Endothelial cell of umbilical vein (primary cell): ENCODE measurements at regions of chr6 and their contacts with region 1.

Region 1: DNA sequence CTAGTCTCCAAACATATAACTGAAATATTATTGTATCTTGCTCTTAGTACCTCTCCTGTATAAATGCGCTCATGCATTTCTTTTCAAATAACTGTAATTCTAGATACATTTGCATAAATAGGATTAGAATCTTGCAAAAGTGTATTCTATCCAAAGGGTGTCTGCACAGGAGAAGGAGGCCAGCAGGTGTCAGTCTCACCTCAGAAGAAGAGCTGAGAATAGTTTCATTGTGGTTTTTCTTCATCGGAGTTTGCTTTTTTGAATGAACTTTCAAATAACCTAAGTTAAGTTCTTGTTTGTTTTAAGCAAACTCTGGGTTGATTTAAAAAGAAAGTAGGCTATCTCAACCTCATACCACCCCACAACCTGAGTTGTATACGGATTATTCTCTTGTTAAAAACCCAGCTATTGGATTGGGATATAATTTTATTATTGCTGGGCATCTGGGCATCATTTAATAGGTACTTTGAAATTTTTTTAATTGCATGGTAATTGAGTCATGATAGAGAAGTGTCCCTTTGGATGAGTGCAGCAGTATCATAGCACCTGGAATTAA is 125.0 kb upstream of the MLIP start:
- DNase-seq: peak; percentile 75
- H3K4me3 ChIP-seq: no peak overlapping the region
- H3K27ac ChIP-seq: no peak overlapping the region
- H3K4me1 ChIP-seq: peaks cover 13% of the 10 kb centered on the region
- H3K27me3 ChIP-seq: no peaks in the 10 kb centered on the region
- CTCF ChIP-seq: peak; percentile 65 to 68
- POLR2A ChIP-seq: no peak

Region 2: DNA sequence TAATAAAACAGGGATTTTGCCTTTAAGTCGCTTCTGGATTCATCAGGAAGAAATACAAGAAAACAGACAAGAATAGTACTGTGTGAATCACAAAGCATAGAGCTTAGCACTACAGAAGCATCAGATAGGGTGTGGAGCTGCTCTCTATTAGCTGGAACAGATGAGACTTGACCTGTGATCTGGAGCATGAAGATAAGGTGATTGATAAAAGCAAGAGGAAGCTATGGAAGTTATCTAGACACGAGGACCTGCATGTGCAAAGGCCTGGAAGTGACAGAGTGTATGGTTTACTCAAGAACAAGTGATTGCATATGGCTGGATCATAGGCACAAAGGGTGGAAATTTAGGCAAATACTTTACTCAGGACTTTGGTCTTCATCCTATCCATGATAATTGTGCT is 12.1 kb after region 1 on chr6:
- CTCF ChIA-PET with region 1: interaction called, 17 read pairs
- POLR2A ChIA-PET with region 1: no interaction called
- dilution Hi-C with region 1: no loop called
- intact Hi-C with region 1: no loop called
- DNase-seq: peak; percentile 15
- H3K4me3 ChIP-seq: no peak overlapping the region
- H3K27ac ChIP-seq: no peak overlapping the region
- H3K4me1 ChIP-seq: peaks cover 8% of the 10 kb centered on the region
- H3K27me3 ChIP-seq: no peaks in the 10 kb centered on the region
- CTCF ChIP-seq: no peak
- POLR2A ChIP-seq: no peak

Region 3: GRCh38 chr6:54244430-54244829 is 258.2 kb after region 1 on chr6:
- CTCF ChIA-PET with region 1: interaction called, 66 read pairs
- POLR2A ChIA-PET with region 1: no interaction called
- dilution Hi-C with region 1: no loop called
- intact Hi-C with region 1: loop called (anchors 1 kb)
- DNase-seq: peak; percentile 59
- H3K4me3 ChIP-seq: no peak overlapping the region
- H3K27ac ChIP-seq: no peak overlapping the region
- H3K4me1 ChIP-seq: no peaks in the 10 kb centered on the region
- H3K27me3 ChIP-seq: no peaks in the 10 kb centered on the region
- CTCF ChIP-seq: peak; percentile 40 to 41
- POLR2A ChIP-seq: no peak

Region 4: GRCh38 chr6:54335871-54336270 is 349.6 kb after region 1 on chr6:
- CTCF ChIA-PET with region 1: interaction called, 11 read pairs
- POLR2A ChIA-PET with region 1: no interaction called
- dilution Hi-C with region 1: no loop called
- intact Hi-C with region 1: loop called (anchors 1 kb)
- DNase-seq: peak; percentile 99
- H3K4me3 ChIP-seq: no peak overlapping the region
- H3K27ac ChIP-seq: peak overlapping the region; percentile 94
- H3K4me1 ChIP-seq: peaks cover 28% of the 10 kb centered on the region
- H3K27me3 ChIP-seq: no peaks in the 10 kb centered on the region
- CTCF ChIP-seq: no peak
- POLR2A ChIP-seq: peak; percentile 90

Region 5: DNA sequence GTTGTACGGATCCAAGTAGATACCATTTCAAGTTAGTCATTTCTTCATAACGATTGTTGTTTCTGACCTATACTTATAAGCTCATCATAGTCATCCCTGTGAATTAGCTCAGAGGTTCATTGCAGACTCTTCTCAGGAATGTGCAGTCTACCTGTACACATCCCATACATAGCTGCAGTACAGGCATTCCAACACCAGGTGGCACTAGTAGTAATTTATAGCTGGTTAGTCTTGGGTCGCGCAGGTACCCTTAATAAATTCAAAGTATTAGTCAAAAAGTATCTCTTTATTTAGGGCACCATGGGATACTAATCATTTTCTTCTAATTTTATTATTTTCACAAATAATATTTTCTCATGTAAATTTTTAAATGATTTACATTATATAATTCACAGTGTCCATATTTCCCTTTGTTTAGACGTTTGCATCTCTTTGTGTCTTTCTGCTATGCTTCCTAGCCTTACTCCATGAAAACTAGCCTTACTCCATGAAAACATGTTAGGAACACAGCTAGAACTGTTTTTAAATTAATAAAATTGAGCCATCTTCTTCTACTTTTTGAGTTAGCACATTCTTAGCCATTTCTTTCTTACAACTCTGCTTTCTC is 731.7 kb after region 1 on chr6:
- CTCF ChIA-PET with region 1: interaction called, 48 read pairs
- POLR2A ChIA-PET with region 1: no interaction called
- dilution Hi-C with region 1: no loop called
- intact Hi-C with region 1: loop called (anchors 5 kb)
- DNase-seq: peak; percentile 61
- H3K4me3 ChIP-seq: no peak overlapping the region
- H3K27ac ChIP-seq: no peak overlapping the region
- H3K4me1 ChIP-seq: no peaks in the 10 kb centered on the region
- H3K27me3 ChIP-seq: peaks cover 0 to 2% of the 10 kb centered on the region in 2 experiments
- CTCF ChIP-seq: peak; percentile 64 to 76
- POLR2A ChIP-seq: no peak

Region 6: GRCh38 chr6:55069132-55069781 is 1083.0 kb after region 1 on chr6:
- CTCF ChIA-PET with region 1: interaction called, 110 read pairs
- POLR2A ChIA-PET with region 1: no interaction called
- dilution Hi-C with region 1: no loop called
- intact Hi-C with region 1: loop called (anchors 1 kb)
- DNase-seq: peak; percentile 60
- H3K4me3 ChIP-seq: no peak overlapping the region
- H3K27ac ChIP-seq: no peak overlapping the region
- H3K4me1 ChIP-seq: no peaks in the 10 kb centered on the region
- H3K27me3 ChIP-seq: no peaks in the 10 kb centered on the region
- CTCF ChIP-seq: peak; percentile 35 to 46
- POLR2A ChIP-seq: no peak